ENCODE measurements at regions of chr2 and their contacts with region 1.

Region 1: DNA sequence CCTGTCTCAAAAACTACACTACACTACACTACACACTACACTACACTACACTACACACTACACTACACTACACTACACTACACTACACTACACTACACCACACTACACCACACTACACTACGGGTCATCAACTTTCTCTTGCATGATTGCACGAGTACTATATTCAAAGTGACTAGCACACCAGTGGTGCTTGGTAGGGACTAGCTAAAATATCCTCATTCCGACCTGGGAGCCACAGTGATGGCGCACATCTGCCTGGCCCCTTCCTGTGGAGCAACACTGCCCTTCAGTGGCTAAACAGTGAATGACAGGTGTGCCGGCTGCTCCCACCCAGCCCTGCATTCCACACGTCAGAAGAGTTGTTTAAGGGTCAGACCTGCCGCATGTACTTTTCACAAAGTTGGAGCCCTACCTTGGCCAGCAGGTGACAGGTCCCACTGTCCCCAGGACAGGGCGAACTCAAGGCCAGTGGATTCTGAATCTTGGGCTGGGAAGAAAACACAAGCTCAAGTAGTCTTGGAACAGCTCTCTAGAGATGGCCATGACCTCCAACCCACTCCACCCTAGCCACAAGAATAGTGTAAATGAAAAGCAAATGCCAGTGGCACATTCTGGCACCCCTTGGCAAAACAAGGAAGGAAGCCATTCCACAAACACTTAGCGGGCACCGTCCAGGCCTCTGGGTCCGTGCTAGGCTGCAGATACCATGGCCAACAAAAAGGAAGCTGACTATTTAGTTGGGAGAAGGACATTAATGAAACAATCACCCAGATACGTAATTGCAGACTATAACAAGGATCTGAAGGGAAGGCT is 79.7 kb upstream of the MSH2 start:
- DNase-seq: peak; percentile 87
- ATAC-seq: peak; percentile 98
- H3K4me3 ChIP-seq: no peak overlapping the region
- H3K27ac ChIP-seq: no peak overlapping the region
- H3K4me1 ChIP-seq: peaks cover 10% of the 10 kb centered on the region
- H3K27me3 ChIP-seq: no peaks in the 10 kb centered on the region
- CTCF ChIP-seq: peak; percentile 96

Region 2: DNA sequence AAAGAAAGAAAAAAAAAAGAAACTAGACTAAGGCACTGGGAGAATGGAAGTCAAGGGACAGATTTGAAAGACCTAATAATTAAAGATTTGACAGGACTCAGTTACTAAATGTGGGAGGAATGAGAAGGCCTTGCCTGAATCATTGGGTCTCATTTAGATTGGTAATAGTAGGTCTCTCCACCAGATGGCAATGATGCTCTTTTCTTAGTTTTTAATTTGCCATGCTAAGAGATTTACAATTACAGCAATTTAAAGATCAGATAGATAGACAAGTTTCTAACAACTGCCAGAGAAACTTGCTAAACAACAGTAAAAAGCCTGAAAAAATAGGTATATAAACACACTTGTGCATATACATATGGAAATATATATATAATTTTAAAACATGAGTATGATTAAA is 690.9 kb before region 1 on chr2:
- CTCF ChIA-PET with region 1: no interaction called
- POLR2A ChIA-PET with region 1: no interaction called
- intact Hi-C with region 1: loop called (anchors 10 kb)
- DNase-seq: peak; percentile 86
- ATAC-seq: peak; percentile 40; the same call in 1 of the 2 replicates
- H3K4me3 ChIP-seq: no peak overlapping the region
- H3K27ac ChIP-seq: no peak overlapping the region
- H3K4me1 ChIP-seq: peaks cover 8% of the 10 kb centered on the region; the same call in 1 of the 2 replicates
- H3K27me3 ChIP-seq: no peaks in the 10 kb centered on the region
- CTCF ChIP-seq: peak; percentile 77

Region 3: GRCh38 chr2:47016172-47016913 is 306.9 kb before region 1 on chr2:
- CTCF ChIA-PET with region 1: interaction called, 5 read pairs
- POLR2A ChIA-PET with region 1: no interaction called
- intact Hi-C with region 1: loop called (anchors 2 kb)
- DNase-seq: peak; percentile 95
- ATAC-seq: peak; percentile 97
- H3K4me3 ChIP-seq: no peak overlapping the region
- H3K27ac ChIP-seq: peak overlapping the region; percentile 61
- H3K4me1 ChIP-seq: peaks cover 27% of the 10 kb centered on the region
- H3K27me3 ChIP-seq: no peaks in the 10 kb centered on the region
- CTCF ChIP-seq: peak; percentile 46

Region 4: GRCh38 chr2:47198985-47199451 is 124.2 kb before region 1 on chr2:
- CTCF ChIA-PET with region 1: interaction called, 13 read pairs
- POLR2A ChIA-PET with region 1: no interaction called
- intact Hi-C with region 1: loop called (anchors 5 kb)
- DNase-seq: peak; percentile 96
- ATAC-seq: peak; percentile 63
- H3K4me3 ChIP-seq: no peak overlapping the region
- H3K27ac ChIP-seq: peak overlapping the region; percentile 55
- H3K4me1 ChIP-seq: peaks cover 70% of the 10 kb centered on the region
- H3K27me3 ChIP-seq: no peaks in the 10 kb centered on the region
- CTCF ChIP-seq: no peak

Measured in PC-3 (cell line).